ENCODE measurements at regions of chr13 and their contacts with region 1.

Region 1: GRCh38 chr13:112689303-112690165 is at the start of gene ATP11A:
- DNase-seq: peak; percentile 93 to 96 (median 94)
- H3K4me3 ChIP-seq: peak within 1 kb of the TSS; percentile 60
- H3K27ac ChIP-seq: peak within 1 kb of the TSS; percentile 91 to 92
- H3K4me1 ChIP-seq: peaks cover 2% of the 10 kb centered on the region
- H3K27me3 ChIP-seq: no peaks in the 10 kb centered on the region
- CTCF ChIP-seq: peak in 2 of 3 donors; percentile 8 to 36
- EP300 ChIP-seq: no peak
- POLR2A ChIP-seq: peak; percentile 89
- total RNA-seq, gene ATP11A: 14.8 to 72.7 (median 36.2) TPM

Region 2: DNA sequence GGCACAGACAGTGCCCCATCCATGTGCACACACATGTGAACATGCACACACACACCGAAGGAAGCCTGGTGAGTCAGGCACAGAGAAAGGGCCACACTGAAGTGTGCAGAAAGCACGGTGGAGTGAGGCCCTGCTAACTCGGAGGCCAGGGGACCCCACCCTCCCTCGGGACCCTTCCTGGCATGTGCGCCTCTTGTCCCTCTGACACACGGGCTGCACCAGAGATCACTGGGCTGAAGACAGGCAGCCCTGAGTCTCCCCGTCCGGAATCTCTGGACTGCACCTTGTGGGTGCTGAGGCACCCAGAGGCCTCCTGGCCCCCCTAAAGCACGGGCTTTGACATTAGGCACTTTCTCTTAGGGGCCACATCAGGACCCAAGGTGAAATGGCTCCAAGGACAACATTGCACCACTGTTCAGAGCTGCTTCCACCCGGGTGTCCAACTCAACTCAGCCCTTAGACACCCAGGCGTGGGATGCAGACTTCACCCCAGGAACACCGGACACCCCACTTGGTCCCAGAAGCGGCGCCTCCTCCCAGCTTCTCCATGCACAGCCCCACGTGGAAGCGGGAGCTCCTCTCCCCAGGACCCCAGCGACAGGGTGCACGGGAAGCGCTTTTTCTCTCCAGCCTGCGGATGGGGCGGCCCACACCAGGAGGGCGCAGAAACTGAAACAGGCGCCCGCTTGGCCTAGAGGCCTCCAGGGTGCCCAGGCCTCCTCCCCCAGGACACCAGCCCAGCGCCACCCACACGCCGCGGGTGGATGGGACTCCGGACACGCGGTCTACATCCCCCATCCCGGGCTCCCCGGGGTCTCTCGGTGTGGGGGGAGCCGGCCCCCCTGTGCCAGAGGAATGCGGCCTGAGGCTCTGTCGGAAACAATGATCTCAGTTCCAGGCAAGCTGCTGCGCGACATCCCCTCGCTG is 223.1 kb before region 1 on chr13:
- intact Hi-C with region 1: no loop called
- DNase-seq: peak in 1 of 5 donors; percentile 9
- H3K4me3 ChIP-seq: no peak overlapping the region
- H3K27ac ChIP-seq: no peak overlapping the region
- H3K4me1 ChIP-seq: no peaks in the 10 kb centered on the region
- H3K27me3 ChIP-seq: no peaks in the 10 kb centered on the region
- CTCF ChIP-seq: no peak
- EP300 ChIP-seq: no peak
- POLR2A ChIP-seq: no peak

Region 3: DNA sequence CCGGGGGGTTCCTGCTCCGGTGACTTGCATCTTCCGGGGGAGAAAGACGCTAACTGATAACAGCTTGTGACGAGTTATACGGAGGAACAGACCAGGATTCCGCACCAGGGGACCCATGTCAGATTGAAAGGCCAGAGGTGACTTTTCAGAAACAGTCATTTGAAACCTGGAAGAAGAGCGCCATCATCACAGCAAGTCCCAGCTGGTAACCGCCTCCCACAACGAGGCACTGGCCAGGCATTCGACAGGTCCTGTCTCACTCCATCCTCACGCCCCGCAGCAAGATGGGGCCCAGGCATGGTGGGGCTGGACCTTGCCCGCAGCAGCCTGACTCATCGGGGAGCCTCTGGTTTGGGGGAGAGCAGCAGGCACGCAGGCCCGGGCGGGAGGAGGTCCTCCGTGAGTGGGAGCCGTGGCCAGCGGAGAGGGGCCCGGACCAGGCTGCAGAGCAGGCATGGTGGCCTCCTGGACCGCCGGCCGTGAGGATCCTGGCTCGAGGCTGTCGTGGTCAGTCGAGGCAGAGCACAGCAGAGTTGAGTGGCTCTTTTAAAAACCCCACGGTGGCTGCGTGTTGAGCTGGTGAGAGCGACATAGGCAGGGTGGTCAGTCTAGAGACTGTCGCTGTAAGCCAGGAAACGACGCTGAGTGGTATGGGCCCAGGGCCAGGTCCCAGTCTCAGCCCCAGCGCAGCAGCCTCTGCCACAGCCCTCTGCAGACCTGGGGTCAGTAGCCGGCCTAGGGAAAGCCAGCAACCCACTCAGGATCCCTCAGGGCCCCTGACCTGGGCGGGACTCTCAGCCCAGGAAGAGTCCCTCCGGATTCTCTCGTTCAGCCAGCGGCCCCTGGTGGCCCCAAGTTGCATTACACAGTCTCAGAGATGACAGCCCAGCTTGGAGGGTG is 184.6 kb after region 1 on chr13:
- intact Hi-C with region 1: loop called in 1 of 4 experiments (anchors 5 kb)
- DNase-seq: peak; percentile 69 to 88 (median 82)
- H3K4me3 ChIP-seq: no peak overlapping the region
- H3K27ac ChIP-seq: peak overlapping the region in 1 of 2 donors; percentile 24
- H3K4me1 ChIP-seq: no peaks in the 10 kb centered on the region
- H3K27me3 ChIP-seq: no peaks in the 10 kb centered on the region
- CTCF ChIP-seq: peak; percentile 70 to 90 (median 89)
- EP300 ChIP-seq: no peak
- POLR2A ChIP-seq: no peak

Region 4: GRCh38 chr13:112905990-112906641 is 216.6 kb after region 1 on chr13:
- intact Hi-C with region 1: no loop called
- DNase-seq: peak in 1 of 5 donors; percentile 17
- H3K4me3 ChIP-seq: no peak overlapping the region
- H3K27ac ChIP-seq: no peak overlapping the region
- H3K4me1 ChIP-seq: no peaks in the 10 kb centered on the region
- H3K27me3 ChIP-seq: no peaks in the 10 kb centered on the region
- CTCF ChIP-seq: no peak
- EP300 ChIP-seq: no peak
- POLR2A ChIP-seq: no peak

Region 5: GRCh38 chr13:113138792-113139551 is 449.4 kb after region 1 on chr13:
- intact Hi-C with region 1: no loop called
- DNase-seq: peak in 2 of 5 donors; percentile 27 to 38
- H3K4me3 ChIP-seq: no peak overlapping the region
- H3K27ac ChIP-seq: peak overlapping the region in 1 of 2 donors; percentile 13
- H3K4me1 ChIP-seq: peaks cover 1% of the 10 kb centered on the region
- H3K27me3 ChIP-seq: no peaks in the 10 kb centered on the region
- CTCF ChIP-seq: no peak
- EP300 ChIP-seq: no peak
- POLR2A ChIP-seq: no peak

Measured in ovary (tissue), 10 donors.